ENCODE measurements at regions of chr13 and their contacts with region 1.

Region 1: GRCh38 chr13:79423801-79424642 is 18.0 kb upstream of the RBM26 start:
- DNase-seq: no peak
- ATAC-seq: peak; percentile 70

Region 2: DNA sequence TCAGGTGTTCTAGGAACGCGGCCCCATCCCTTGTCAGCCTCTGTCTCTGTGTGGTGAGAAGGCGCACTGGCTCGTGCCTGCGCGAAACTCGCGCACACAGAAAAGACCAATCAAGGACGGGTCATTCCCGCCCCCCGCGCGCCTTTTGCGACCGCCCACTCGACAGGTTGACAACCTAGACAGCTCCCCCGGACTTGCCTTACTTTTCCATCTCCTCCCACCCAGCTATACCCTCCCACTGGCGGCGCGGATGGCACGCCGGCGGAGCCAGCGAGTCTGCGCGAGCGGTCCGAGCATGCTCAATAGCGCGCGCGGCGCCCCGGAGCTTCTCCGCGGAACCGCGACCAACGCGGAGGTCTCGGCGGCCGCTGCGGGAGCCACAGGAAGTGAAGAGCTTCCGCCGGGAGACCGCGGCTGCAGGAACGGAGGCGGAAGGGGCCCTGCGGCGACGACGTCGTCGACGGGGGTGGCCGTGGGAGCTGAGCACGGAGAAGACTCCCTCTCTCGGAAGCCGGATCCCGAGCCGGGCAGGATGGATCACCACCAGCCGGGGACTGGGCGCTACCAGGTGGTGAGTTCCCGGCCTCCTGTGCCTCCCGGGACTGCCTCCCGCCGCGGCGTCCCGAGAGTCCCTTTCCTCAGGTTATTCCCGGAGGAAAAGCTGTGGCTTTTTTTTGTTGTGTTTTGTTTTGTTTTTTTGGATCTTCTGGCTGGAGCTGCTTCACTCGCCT is 57.1 kb after region 1 on chr13 and contains the start of gene NDFIP2:
- intact Hi-C with region 1: loop called (anchors 10 kb)
- DNase-seq: peak; percentile 92
- ATAC-seq: peak; percentile 95
- total RNA-seq, gene NDFIP2: 33.9 TPM

Region 3: GRCh38 chr13:79541426-79542049 is 117.5 kb after region 1 on chr13:
- intact Hi-C with region 1: loop called (anchors 5 kb)
- DNase-seq: no peak
- ATAC-seq: peak; percentile 57